Endothelial cell of umbilical vein (primary cell): ENCODE measurements at regions of chr15 and their contacts with region 1.

Region 1: DNA sequence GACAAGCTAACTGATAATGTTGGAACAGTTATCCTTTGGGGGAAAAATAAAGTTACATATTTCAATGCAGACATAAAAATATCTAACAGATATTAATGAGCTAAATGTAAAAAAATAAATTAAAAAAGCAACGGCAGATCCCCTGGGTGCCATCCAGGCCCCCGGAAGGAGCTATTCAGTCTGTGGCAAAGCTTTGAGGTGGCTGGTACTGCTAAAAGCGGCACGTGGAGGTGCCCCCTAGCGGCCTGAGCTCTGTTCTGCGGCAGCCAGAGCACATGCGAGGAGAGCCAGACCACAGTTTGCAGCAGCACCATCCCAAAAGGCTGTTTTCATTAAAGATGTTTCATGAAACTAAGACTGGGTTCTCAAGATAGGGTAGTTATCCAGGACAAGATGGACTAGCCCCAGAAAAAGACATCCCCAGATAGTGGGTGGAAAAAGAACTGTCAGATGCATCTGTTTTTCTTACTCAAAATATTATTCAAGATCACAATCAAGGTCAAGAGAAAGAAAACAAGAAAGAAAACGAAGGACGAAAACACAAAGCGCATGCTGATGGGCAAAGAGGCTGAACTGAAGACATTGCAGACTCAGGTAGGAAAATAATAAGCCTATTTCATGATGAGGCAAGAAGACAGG is 18.7 kb downstream of the AP3S2 start:
- DNase-seq: peak; percentile 69
- H3K4me3 ChIP-seq: no peak overlapping the region
- H3K27ac ChIP-seq: no peak overlapping the region
- H3K4me1 ChIP-seq: no peaks in the 10 kb centered on the region
- H3K27me3 ChIP-seq: no peaks in the 10 kb centered on the region
- CTCF ChIP-seq: peak; percentile 96 to 98
- POLR2A ChIP-seq: no peak

Region 2: DNA sequence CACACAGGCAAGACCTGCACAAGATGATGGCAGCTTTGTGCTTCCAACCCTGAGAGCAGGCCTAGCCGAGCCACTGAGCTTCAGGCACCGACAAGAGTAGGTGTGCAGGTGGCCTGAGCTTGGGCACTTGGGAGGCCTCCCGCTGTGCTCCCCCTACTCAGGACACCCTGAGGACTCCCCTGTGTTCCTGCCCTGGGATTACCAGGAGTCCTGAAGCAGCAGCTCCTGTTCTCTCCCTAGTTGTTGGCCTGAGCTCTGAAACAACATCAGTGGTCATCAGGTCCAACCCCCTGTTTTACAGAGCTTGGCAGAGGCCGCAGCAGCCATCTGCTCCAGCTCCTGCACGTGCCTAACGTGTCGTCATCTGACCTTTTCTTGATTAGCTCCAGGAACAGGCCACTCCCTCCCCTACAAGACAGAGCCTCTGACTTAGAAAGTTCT is 107.0 kb before region 1 on chr15:
- CTCF ChIA-PET with region 1: interaction called, 599 read pairs
- POLR2A ChIA-PET with region 1: no interaction called
- dilution Hi-C with region 1: loop called (anchors 25 kb)
- intact Hi-C with region 1: no loop called
- DNase-seq: no peak
- H3K4me3 ChIP-seq: no peak overlapping the region
- H3K27ac ChIP-seq: no peak overlapping the region
- H3K4me1 ChIP-seq: no peaks in the 10 kb centered on the region
- H3K27me3 ChIP-seq: no peaks in the 10 kb centered on the region
- CTCF ChIP-seq: no peak
- POLR2A ChIP-seq: no peak

Region 3: GRCh38 chr15:89794627-89795241 is 80.3 kb before region 1 on chr15:
- CTCF ChIA-PET with region 1: interaction called, 20 read pairs
- POLR2A ChIA-PET with region 1: no interaction called
- dilution Hi-C with region 1: no loop called
- intact Hi-C with region 1: no loop called
- DNase-seq: peak; percentile 95
- H3K4me3 ChIP-seq: no peak overlapping the region
- H3K27ac ChIP-seq: peak overlapping the region; percentile 52
- H3K4me1 ChIP-seq: peaks cover 19% of the 10 kb centered on the region
- H3K27me3 ChIP-seq: no peaks in the 10 kb centered on the region
- CTCF ChIP-seq: no peak
- POLR2A ChIP-seq: no peak

Region 4: GRCh38 chr15:89820666-89821611 is 54.1 kb before region 1 on chr15:
- CTCF ChIA-PET with region 1: interaction called, 28 read pairs
- POLR2A ChIA-PET with region 1: no interaction called
- dilution Hi-C with region 1: no loop called
- intact Hi-C with region 1: no loop called
- DNase-seq: peak; percentile 72
- H3K4me3 ChIP-seq: no peak overlapping the region
- H3K27ac ChIP-seq: peak overlapping the region; percentile 71
- H3K4me1 ChIP-seq: peaks cover 34% of the 10 kb centered on the region
- H3K27me3 ChIP-seq: no peaks in the 10 kb centered on the region
- CTCF ChIP-seq: no peak
- POLR2A ChIP-seq: peak; percentile 36

Region 5: GRCh38 chr15:89845305-89845893 is 29.6 kb before region 1 on chr15:
- CTCF ChIA-PET with region 1: interaction called, 36 read pairs
- POLR2A ChIA-PET with region 1: no interaction called
- dilution Hi-C with region 1: no loop called
- intact Hi-C with region 1: no loop called
- DNase-seq: peak; percentile 82
- H3K4me3 ChIP-seq: no peak overlapping the region
- H3K27ac ChIP-seq: peak overlapping the region; percentile 86
- H3K4me1 ChIP-seq: peaks cover 37% of the 10 kb centered on the region
- H3K27me3 ChIP-seq: no peaks in the 10 kb centered on the region
- CTCF ChIP-seq: no peak
- POLR2A ChIP-seq: peak; percentile 10

Region 6: DNA sequence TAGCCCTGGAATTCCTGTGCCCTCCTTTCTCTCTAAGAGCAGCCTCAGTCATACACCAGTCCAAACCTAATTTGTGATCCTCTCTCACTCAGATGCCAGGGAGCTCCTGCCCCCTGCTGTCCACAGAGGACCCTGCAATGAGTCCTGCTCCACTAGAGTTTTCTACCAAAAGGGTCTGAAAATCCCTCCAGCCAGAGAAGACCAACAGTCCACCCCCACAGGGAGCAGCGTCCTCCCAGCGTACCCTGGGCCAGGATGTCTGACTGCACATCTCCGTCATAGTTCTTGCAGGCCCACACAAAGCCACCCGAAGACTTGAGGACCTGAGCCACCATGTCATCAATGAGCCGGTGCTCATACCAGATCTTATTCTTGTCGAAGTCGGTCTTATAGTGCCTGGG is 211.8 kb after region 1 on chr15:
- CTCF ChIA-PET with region 1: interaction called, 12 read pairs
- POLR2A ChIA-PET with region 1: no interaction called
- dilution Hi-C with region 1: no loop called
- intact Hi-C with region 1: no loop called
- DNase-seq: peak; percentile 50
- H3K4me3 ChIP-seq: no peak overlapping the region
- H3K27ac ChIP-seq: no peak overlapping the region
- H3K4me1 ChIP-seq: no peaks in the 10 kb centered on the region
- H3K27me3 ChIP-seq: no peaks in the 10 kb centered on the region
- CTCF ChIP-seq: peak; percentile 83 to 91
- POLR2A ChIP-seq: no peak

Region 7: DNA sequence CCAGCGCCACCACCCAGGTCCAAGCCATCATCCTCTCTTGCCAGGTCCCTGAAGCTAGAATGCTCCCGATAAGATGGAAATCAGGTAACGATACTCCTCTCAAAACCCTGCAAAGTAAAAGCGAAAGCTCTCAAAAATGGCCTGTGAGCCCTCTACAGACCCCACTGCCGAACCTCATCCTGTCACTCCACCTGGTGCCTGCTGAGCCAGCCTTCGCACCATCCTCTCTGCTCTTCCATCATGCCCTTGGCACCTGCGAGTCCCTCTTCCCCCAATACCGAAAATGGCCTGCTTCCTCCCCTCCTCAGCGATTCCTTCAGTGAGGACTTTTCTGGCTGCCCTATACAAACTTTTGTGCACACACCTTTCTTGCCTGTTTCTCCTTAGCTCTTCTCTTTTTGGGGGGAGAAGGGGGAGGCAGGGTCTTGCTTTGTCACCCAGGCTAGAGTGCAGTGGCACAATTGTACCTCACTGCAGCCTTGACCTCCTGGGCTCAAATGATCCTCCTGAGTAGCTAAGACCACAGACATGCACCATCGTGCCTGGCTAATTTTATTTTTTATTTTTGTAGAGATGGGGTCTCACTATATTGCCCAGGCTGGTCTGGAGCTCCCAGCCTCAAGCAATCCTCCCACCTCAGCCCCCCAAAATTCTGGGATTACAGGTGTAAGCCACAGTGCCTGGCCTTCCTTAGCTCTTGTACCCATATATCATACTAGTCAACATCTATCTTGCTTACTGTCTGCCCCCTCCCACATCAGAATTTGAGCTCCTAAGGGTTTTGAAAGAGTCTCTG is 224.2 kb after region 1 on chr15:
- CTCF ChIA-PET with region 1: no interaction called
- POLR2A ChIA-PET with region 1: no interaction called
- dilution Hi-C with region 1: no loop called
- intact Hi-C with region 1: no loop called
- DNase-seq: no peak
- H3K4me3 ChIP-seq: no peak overlapping the region
- H3K27ac ChIP-seq: no peak overlapping the region
- H3K4me1 ChIP-seq: peaks cover 18% of the 10 kb centered on the region
- H3K27me3 ChIP-seq: no peaks in the 10 kb centered on the region
- CTCF ChIP-seq: no peak
- POLR2A ChIP-seq: no peak